A673 (cell line): ENCODE measurements at regions of chr6 and their contacts with region 1.

Region 1: DNA sequence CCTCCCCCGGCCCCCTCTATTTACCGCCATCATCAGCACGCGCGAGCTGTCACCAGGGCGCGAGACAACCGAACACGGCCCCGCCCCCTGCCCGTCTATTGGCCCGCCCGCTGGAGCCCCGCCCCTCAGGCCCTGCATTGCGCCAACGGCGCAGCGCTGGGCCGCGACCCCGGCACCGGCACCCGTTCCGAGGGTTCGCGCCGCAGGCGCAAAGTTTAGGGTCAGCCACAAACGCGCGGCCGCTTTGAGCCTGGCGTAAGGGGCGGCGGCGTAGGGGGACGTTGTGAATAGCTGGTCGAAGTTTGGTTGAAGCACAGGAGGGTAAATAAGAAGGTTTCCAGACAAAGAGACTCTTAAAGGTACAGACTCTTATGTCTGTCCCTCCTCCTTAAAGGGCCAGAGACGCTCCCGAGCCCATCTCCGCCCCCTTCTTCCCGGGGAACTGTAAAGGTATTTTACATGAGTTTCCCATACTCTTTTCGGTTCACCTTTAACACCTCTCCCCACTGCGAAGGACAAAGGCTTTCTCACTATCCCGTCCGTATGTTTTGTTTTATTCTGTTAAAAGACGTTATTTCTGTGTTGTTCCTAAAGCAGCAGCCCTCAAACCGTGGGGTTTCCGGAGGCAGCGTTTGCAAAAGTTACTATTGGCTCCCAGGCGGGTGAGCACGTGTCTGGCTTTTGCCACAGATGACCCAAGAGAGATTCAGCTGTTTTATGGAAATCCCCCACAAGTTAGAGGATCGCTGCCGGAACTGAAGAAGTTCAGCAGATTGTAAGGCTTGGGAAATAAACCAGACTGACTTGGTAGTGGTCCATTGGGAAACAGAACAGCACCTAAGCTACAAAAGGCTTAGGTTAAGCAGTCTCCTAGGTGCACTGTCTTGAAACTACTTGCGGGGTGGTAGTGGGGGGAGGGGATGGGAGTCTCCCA is at the start of gene USP49:
- DNase-seq: peak; percentile 94
- H3K4me3 ChIP-seq: peak within 1 kb of the TSS; percentile 77
- H3K27ac ChIP-seq: peak within 1 kb of the TSS; percentile 81
- H3K4me1 ChIP-seq: peaks cover 11% of the 10 kb centered on the region
- H3K27me3 ChIP-seq: no peaks in the 10 kb centered on the region
- CTCF ChIP-seq: no peak
- total RNA-seq, gene USP49: 10.5 and 13.0 TPM in 2 replicates

Region 2: DNA sequence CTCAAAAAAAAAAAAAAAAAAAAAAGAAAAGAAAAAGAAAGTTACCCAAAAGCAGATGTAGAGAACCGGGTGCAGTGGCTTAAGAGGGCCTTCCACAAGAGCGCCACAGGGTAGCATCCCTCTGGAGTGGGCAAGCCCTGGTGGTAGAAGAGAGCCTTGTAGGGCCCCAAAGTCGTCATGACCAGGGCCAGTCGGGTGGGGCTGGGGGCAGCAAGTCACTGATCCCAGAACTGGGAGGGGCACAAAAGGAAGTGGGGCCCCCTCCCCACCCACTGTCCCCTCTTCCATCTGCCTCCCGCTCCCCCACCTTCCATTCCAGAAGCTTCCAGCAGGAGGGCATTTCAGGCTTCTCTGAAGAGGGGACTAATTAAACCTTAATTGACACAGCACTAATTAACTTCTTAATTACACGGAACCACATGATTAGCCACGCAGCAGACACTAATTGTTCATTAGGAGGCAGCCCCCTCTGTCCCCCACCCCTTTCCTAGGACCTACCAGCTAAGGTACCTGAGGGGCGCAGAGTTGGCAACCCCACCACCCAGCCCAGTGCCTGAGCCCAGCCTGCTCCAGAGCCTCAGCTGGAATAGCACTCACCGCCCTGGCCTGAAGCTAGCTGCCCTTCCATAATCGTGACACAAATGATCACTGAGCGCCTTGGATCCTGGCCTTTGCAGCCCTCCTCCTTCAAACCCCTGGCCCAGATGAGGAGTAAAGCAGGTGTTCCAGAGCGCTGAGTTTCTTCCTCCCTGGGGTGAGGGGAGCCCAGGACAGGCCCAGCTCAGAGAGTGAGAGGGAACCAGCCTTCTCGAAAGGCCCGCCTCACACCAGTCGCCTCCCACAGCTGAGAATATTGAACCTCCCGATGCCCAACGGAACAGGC is 222.5 kb before region 1 on chr6:
- CTCF ChIA-PET with region 1: no interaction called
- POLR2A ChIA-PET with region 1: no interaction called
- intact Hi-C with region 1: no loop called
- DNase-seq: no peak
- H3K4me3 ChIP-seq: no peak overlapping the region
- H3K27ac ChIP-seq: no peak overlapping the region
- H3K4me1 ChIP-seq: peaks cover 15% of the 10 kb centered on the region
- H3K27me3 ChIP-seq: no peaks in the 10 kb centered on the region
- CTCF ChIP-seq: no peak

Region 3: DNA sequence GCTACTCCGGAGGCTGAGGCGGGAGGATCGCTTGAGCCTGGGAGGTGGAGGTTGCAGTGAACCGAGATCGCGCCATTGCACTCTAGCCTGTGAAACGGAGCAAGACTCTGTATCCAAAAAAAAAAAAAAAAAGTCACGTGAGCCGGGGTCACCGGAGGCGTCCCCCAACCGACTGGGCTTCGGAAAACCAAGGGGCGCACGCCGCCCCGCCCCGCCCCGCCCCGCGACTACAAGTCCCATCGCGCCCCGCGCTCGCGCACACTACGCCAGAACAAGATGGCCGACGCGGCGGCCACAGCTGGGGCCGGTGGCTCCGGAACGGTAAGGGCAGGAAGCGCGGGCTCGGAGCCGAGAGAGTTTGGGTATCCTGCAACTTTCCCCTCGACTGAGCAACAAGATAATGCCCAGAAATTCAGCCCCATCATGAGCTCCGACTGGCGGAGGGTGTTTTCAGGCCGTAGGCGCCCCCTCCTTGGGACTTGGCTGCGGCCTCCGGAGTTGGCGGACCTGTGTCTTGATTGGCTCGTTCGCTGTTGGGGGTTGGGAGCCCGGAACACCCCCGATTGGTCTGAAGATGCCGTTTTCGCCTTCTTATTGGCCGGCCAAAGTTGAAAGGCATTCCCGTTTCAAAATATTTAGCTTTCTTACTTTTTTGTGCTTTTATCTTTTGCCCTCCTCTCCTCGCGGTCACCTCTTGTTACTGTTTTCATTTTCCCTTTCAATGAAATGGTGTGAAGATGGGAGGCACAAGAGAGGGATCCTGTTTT is 154.9 kb after region 1 on chr6 and contains the start of gene TAF8:
- CTCF ChIA-PET with region 1: no interaction called
- POLR2A ChIA-PET with region 1: interaction called, 10 read pairs
- intact Hi-C with region 1: no loop called
- DNase-seq: peak; percentile 94
- H3K4me3 ChIP-seq: peak within 1 kb of the TSS; percentile 59
- H3K27ac ChIP-seq: peak within 1 kb of the TSS; percentile 91
- H3K4me1 ChIP-seq: peaks cover 27% of the 10 kb centered on the region
- H3K27me3 ChIP-seq: no peaks in the 10 kb centered on the region
- CTCF ChIP-seq: no peak
- total RNA-seq, gene TAF8: 22.5 and 26.0 TPM in 2 replicates